Gastrocnemius medialis (tissue), 4 donors: ENCODE measurements at regions of chr4 and their contacts with region 1.

Region 1: DNA sequence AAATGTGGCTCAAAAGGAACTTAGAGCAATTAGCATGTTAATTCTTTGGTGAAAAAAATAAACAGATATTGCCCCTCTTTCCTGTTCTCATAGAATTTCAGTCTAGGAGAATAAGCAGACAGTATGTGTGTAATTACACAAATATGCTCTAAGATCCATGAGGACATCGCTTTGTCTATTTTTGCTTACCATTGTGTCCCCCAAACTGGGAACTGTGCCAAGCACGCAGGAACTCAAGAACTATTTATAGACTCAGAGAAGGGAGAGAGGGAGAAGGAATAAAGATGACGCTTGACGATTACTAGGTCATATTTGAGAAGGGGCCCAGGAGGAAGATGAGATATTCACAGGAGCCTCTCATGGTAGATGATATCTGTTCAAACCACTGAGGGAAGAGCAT is 692.6 kb downstream of the RAB28 start:
- DNase-seq: no peak
- ATAC-seq: no peak
- H3K4me3 ChIP-seq: no peak overlapping the region
- H3K27ac ChIP-seq: no peak overlapping the region
- H3K4me1 ChIP-seq: no peaks in the 10 kb centered on the region
- H3K27me3 ChIP-seq: no peaks in the 10 kb centered on the region
- CTCF ChIP-seq: no peak
- POLR2A ChIP-seq: no peak

Region 2: DNA sequence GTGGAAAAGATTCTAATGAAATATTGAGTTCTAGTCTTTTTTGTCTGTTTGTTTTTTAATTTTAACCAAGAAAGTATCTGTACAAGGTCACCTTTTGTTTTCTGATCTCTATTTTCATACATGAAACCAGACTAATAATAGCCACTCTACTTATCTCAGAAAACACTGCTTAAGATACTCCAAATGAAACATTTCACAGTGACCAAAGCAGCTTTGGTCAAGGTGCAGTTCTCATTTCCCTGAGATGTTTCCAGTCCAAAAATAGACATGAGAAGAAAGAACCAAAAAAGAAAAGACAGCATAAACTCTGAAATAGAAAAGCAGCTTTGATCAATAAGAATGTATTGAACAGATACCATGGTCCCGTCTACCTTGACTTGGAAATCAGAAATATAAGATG is 90.2 kb before region 1 on chr4:
- in situ Hi-C with region 1: no loop called
- intact Hi-C with region 1: no loop called
- DNase-seq: no peak
- ATAC-seq: no peak
- H3K4me3 ChIP-seq: no peak overlapping the region
- H3K27ac ChIP-seq: no peak overlapping the region
- H3K4me1 ChIP-seq: no peaks in the 10 kb centered on the region
- H3K27me3 ChIP-seq: peaks cover 0 to 4% (median 0%) of the 10 kb centered on the region in 3 donors
- CTCF ChIP-seq: no peak
- POLR2A ChIP-seq: no peak

Region 3: DNA sequence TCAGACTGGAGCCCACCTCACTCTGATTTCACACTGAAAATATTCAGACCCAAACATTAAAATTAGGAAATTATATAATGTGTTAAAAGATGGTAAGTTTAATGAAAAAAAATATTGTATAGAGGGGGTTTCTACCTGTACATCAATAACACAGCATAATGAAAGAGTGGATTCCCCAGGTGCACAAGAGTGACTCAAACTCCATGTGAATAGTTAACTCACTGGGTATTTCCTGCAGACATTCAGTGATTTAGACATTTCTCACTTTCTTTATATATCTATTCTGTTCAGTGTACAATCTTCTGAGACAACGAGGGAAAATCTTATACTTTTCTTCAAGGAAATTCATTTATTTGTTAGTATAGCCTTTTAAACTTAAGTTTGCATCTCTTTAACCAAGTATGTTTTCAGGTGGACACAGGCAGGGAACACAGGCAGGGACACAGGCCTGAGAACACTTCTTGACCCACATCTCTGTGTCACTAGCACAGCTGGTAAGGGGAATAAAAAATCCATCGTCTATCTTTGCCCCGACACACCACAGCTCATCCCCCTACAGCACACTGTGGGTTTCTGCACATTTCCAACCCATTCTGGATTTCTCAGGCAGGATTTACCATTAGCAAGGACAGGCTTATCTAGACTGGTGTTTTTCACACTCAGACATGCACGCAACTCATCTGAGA is 1361.4 kb after region 1 on chr4:
- in situ Hi-C with region 1: no loop called
- intact Hi-C with region 1: loop called (anchors 10 kb)
- DNase-seq: no peak
- ATAC-seq: no peak
- H3K4me3 ChIP-seq: no peak overlapping the region
- H3K27ac ChIP-seq: no peak overlapping the region
- H3K4me1 ChIP-seq: no peaks in the 10 kb centered on the region
- H3K27me3 ChIP-seq: no peaks in the 10 kb centered on the region
- CTCF ChIP-seq: no peak
- POLR2A ChIP-seq: no peak